ENCODE measurements at regions of chr12 and their contacts with region 1.

Region 1: DNA sequence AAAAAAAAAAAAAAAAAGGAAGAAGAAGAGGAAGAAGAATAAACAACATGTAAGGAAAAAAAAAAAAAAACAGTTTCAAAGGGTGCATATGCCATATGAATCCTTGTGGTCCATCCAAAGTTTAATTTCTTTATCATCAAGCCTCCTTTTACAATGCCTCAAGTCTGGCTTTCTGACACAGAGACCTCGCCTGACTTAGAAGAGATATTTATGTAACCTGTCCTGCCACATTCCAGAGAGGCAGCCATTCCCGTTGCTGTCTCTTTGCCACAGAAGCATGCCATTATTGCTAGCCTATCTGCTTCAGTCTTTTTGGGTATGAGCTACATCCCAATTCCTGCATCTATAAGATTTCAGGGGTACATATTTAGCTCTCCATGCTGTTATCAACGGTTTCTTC is 596.7 kb upstream of the ATP2B1 start:
- DNase-seq: no peak
- ATAC-seq: no peak
- H3K4me3 ChIP-seq: no peak overlapping the region
- H3K27ac ChIP-seq: no peak overlapping the region
- H3K4me1 ChIP-seq: no peaks in the 10 kb centered on the region
- H3K27me3 ChIP-seq: no peaks in the 10 kb centered on the region

Region 2: DNA sequence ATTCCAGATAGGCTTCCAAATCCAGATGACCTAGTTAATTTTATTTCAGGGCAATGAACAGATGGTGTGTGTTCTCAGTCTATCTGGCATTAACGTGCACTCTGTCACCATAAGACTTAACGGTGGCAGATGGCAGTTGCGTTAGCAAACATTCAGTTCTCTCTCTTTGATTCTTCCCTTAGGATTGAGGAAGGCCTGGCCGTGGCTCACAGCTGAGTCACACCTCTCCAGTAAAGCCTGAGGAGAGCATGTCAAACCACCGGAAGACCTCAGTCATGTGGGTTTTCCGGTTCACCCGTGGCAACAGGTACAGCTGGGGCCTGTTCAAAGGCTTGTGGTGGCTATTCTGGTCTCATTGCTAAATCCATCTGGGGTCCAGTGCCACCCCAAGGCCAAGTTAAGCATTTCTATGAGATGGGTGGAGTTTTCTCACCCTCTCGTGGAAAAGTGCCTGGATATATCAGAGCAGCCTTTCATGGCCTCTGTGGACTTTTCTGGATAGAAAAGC is 51.7 kb before region 1 on chr12:
- intact Hi-C with region 1: loop called in 1 of 4 experiments (anchors 2 kb)
- DNase-seq: peak; percentile 72 to 82 (median 77)
- ATAC-seq: peak; percentile 87 to 93
- H3K4me3 ChIP-seq: no peak overlapping the region
- H3K27ac ChIP-seq: peak overlapping the region; percentile 48
- H3K4me1 ChIP-seq: peaks cover 9% of the 10 kb centered on the region
- H3K27me3 ChIP-seq: no peaks in the 10 kb centered on the region

Region 3: GRCh38 chr12:90484094-90484493 is 178.7 kb after region 1 on chr12:
- intact Hi-C with region 1: no loop called
- DNase-seq: no peak
- ATAC-seq: peak in 1 of 2 donors; percentile 66
- H3K4me3 ChIP-seq: no peak overlapping the region
- H3K27ac ChIP-seq: no peak overlapping the region
- H3K4me1 ChIP-seq: no peaks in the 10 kb centered on the region
- H3K27me3 ChIP-seq: no peaks in the 10 kb centered on the region